Right cardiac atrium (tissue), 5 donors: ENCODE measurements at regions of chr2 and their contacts with region 1.

Region 1: GRCh38 chr2:238601433-238602222 is 174.9 kb downstream of the ASB1 start:
- DNase-seq: peak in 1 of 3 donors; percentile 51
- ATAC-seq: peak in 1 of 2 donors; percentile 73
- H3K4me3 ChIP-seq: no peak overlapping the region
- H3K27ac ChIP-seq: no peak overlapping the region
- H3K4me1 ChIP-seq: peaks cover 6% of the 10 kb centered on the region
- H3K27me3 ChIP-seq: no peaks in the 10 kb centered on the region

Region 2: GRCh38 chr2:238247002-238247822 is 354.4 kb before region 1 on chr2:
- intact Hi-C with region 1: no loop called
- DNase-seq: peak in 1 of 3 donors; percentile 28
- ATAC-seq: no peak
- H3K4me3 ChIP-seq: no peak overlapping the region
- H3K27ac ChIP-seq: no peak overlapping the region
- H3K4me1 ChIP-seq: peaks cover 6% of the 10 kb centered on the region
- H3K27me3 ChIP-seq: no peaks in the 10 kb centered on the region

Region 3: GRCh38 chr2:238513346-238513745 is 88.3 kb before region 1 on chr2:
- intact Hi-C with region 1: loop called in 1 of 4 experiments (anchors 10 kb)
- DNase-seq: no peak
- ATAC-seq: no peak
- H3K4me3 ChIP-seq: no peak overlapping the region
- H3K27ac ChIP-seq: no peak overlapping the region
- H3K4me1 ChIP-seq: no peaks in the 10 kb centered on the region
- H3K27me3 ChIP-seq: no peaks in the 10 kb centered on the region